Activated naive CD4-positive, alpha-beta T cell treated with anti-CD3 and anti-CD28 coated beads, Interleukin-2, amount 10 ng/mL, durations not matched to agents 7 days and 5 days (primary cell): ENCODE measurements at regions of chr1 and their contacts with region 1.

Region 1: DNA sequence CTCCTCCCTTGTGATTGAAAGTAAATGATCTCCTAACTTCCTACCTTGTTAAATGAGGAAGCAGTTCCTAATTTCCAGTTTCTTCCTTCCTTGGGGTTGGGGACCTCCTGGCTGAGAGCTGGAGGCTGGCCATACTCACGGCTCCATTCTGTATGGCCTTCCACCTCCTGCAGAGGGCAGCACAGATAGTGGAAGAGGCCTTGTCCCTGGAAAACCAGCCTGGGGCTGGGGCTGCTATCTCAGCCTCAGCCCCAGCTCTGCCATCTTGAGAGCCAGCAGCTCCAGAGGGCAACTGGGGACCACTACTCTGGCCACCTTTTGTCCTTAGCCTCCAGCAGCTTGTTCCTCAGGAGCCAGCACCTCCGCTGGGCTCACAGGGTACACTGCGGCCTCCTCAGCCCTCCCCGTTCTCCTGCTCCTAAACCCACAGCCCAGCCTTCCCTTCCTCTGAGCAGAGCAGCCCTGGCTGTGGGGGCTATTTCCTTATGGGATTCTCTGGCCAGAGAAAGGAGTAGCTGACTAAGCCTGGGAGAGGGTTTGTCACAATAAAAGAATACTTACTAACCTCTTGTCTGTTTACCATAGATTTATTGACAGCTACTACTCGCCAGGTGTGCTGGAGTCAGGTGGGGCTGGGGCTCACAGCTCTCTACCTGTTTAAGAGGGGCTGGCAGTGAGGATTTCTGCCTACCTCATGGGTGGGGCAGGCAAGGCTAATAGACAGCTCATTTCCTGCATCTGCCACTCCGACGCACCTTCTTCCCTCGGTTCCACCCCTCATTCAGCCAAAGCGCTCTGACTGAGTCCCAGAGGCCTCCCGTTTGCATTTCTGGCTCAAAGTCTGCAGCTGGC is 6.3 kb downstream of the TMEM234 start:
- DNase-seq: peak; percentile 79
- H3K4me3 Mint-ChIP-seq: no peak overlapping the region
- H3K27ac Mint-ChIP-seq: peak overlapping the region; percentile 74
- H3K4me1 Mint-ChIP-seq: peaks cover 36% of the 10 kb centered on the region
- H3K27me3 Mint-ChIP-seq: no peaks in the 10 kb centered on the region

Region 2: DNA sequence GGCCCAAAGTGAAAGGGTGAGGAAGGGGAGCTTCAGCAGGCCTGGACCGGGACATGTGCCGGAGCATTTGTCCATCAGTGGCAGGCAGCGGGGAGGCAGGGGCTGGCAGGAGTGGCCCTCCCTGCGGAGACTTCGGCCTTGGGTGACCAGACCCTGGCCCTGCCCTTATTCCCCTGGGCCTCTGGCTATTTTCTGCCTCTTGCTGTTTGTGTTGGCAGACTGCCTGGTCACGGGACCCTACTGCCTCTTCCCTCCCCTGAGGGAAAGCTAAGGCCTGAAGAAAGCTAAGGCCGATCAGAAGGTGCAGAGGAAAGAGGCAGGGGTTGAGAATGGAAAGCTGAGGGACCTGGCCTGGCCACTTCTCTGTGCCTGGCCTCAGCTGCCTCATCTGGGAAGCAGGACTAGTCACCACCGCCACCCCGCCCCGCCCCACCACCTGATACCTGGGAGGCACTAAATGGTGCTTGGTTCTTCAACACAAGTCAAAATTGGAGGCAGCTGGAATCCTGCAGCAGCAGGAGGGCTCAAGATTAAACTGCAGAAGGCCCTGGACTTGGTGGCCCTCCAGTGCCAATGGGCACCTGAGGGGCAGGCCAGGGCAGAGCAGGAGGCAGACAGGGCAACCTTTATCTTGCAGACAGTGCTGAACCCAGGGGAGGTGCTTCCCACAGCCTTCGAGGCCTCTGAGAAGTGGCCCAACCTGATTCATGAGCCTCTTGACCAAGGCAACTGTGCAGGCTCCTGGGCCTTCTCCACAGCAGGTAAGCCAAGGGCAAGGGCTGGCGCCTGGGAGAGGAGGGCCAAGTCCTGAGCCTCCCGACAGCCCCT is 631.6 kb before region 1 on chr1:
- CTCF ChIA-PET with region 1: no interaction called
- DNase-seq: no peak
- H3K4me3 Mint-ChIP-seq: no peak overlapping the region
- H3K27ac Mint-ChIP-seq: no peak overlapping the region
- H3K4me1 Mint-ChIP-seq: no peaks in the 10 kb centered on the region
- H3K27me3 Mint-ChIP-seq: peaks cover 21% of the 10 kb centered on the region

Region 3: DNA sequence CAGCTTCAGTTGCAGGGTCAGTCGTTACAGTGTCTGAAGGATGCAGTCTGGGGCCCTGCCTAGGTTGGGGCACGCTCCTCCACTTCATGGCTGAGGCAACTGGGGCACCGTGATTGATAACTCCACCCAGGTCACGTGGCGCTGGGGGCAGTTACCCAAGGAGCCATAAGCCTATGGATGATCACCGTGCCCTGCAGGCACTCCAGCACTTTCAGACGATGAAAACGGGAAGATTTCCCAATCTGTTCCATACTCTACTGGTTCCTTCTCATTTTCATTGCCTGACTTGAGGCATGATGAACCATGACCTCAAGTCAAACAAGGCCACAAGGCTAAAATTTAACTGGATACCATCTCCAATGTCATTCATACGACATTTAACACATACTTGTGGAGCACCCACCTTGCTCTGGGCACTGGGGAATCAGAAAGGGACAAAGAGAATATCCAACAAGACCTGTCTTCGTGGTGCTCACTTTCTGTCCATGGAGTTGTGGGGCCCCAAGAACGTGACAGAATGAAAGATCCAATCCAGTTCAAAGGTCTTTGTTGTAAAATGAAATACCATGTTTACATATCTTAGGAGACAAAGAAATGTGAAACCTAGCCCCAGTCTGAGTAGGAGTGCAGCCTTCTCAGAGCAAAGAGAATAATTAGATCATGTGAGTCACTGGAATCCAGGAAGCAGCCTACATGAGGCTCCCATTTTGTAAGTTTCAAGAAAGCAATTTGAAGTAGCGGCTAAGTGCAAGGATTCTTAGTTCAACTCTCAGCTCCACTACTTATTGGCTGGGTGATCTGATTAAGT is 360.6 kb before region 1 on chr1:
- CTCF ChIA-PET with region 1: no interaction called
- DNase-seq: no peak
- H3K4me3 Mint-ChIP-seq: no peak overlapping the region
- H3K27ac Mint-ChIP-seq: no peak overlapping the region
- H3K4me1 Mint-ChIP-seq: peaks cover 6% of the 10 kb centered on the region
- H3K27me3 Mint-ChIP-seq: no peaks in the 10 kb centered on the region

Region 4: DNA sequence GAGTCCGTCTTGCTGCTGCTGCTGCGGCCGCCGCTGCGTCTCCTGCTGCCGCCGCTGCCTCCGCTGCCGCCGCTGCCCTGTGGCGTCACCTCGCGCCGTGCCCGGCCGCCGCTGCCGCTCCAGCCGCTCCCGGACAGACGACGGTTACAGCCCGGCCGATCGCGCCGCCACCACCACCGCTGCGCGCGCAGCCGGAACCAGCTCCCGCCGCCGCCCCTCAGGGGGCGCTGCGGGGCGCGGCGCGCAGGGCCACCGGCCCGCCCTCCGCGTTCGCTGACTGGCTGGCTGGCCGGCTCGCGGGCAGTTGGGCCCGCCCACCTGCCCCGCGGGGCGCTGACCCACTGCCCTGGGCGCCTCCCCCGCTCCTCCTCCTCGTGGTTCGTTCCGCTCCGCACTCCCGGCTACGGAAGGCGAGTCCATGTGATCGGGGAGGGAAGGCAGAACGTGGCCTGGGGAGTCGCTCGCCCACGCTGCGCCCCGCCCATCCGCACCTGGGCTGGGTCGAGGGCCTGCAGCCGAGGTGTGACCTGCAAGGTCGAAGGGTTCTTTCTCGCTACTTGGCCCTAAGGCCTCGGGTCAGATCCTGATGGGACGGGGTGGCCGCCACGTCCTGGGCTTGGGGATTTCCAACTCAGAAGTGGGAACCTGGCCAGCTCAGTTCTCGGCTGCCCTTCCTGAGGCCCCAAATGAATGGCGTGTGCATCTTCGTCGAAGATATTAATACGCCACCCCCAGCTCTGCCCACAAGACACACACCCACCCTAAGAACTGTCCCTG is 277.5 kb before region 1 on chr1 and contains the start of gene PTP4A2:
- CTCF ChIA-PET with region 1: no interaction called
- DNase-seq: peak; percentile 91
- H3K4me3 Mint-ChIP-seq: peak within 1 kb of the TSS; percentile 92
- H3K27ac Mint-ChIP-seq: peak within 1 kb of the TSS; percentile 95
- H3K4me1 Mint-ChIP-seq: peaks cover 80% of the 10 kb centered on the region
- H3K27me3 Mint-ChIP-seq: no peaks in the 10 kb centered on the region

Region 5: DNA sequence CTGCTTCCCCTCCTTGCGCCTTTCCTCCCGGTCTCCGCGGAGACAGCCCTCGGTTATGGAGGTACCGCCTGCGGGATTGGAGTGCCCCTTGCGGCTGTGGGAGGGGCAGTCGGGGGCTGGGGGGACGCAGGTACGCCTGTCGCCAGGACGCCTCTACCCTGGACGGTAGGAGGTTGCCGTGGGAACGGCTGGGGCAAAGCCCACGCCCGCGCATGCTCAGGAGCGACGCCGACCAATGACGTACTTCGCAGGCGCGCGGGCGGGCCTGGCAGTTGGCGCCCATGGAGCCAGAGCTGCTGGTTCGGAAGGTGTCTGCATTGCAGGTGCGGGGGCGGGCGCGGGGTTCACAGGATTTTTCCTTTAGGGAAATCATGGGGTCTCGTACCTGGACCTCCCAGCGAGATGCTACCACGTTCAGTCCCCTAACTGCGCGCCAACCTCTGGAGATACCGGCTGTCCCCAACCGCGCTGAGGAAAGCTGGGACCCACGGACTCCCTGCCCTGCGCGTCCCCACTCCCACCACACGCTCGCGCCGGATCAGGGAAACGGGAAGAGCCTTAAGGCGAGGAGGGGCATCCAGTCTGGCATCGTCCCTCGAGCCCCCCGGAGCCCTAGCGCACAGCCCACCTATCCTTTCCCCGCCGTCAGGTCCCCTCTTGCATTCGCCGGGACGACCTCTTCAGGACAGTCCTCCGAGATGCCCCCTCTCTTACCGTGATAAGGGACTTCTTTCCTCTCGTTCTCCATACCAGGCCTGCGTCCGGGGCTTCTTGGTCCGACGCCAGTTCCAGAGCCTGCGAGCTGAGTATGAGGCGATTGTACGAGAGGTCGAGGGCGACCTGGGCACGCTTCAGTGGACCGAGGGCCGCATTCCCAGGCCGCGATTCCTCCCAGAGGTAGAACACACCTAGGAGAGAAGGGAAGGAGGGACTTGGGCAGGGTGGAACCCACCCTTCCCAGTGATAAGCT is 10.2 kb before region 1 on chr1 and contains the start of gene IQCC:
- CTCF ChIA-PET with region 1: interaction called, 35 read pairs
- DNase-seq: peak; percentile 90
- H3K4me3 Mint-ChIP-seq: peak within 1 kb of the TSS; percentile 85
- H3K27ac Mint-ChIP-seq: peak within 1 kb of the TSS; percentile 82
- H3K4me1 Mint-ChIP-seq: peaks cover 50% of the 10 kb centered on the region
- H3K27me3 Mint-ChIP-seq: no peaks in the 10 kb centered on the region

Region 6: GRCh38 chr1:32247983-32248889 is 32.4 kb after region 1 on chr1:
- CTCF ChIA-PET with region 1: interaction called, 61 read pairs
- DNase-seq: peak; percentile 85
- H3K4me3 Mint-ChIP-seq: peak overlapping the region; percentile 67
- H3K27ac Mint-ChIP-seq: peak overlapping the region; percentile 96
- H3K4me1 Mint-ChIP-seq: peaks cover 55% of the 10 kb centered on the region
- H3K27me3 Mint-ChIP-seq: no peaks in the 10 kb centered on the region

Region 7: GRCh38 chr1:32321712-32322291 is 105.9 kb after region 1 on chr1:
- CTCF ChIA-PET with region 1: interaction called, 22 read pairs
- DNase-seq: peak; percentile 60
- H3K4me3 Mint-ChIP-seq: peak overlapping the region; percentile 63
- H3K27ac Mint-ChIP-seq: peak overlapping the region; percentile 95
- H3K4me1 Mint-ChIP-seq: peaks cover 59% of the 10 kb centered on the region
- H3K27me3 Mint-ChIP-seq: no peaks in the 10 kb centered on the region

Region 8: DNA sequence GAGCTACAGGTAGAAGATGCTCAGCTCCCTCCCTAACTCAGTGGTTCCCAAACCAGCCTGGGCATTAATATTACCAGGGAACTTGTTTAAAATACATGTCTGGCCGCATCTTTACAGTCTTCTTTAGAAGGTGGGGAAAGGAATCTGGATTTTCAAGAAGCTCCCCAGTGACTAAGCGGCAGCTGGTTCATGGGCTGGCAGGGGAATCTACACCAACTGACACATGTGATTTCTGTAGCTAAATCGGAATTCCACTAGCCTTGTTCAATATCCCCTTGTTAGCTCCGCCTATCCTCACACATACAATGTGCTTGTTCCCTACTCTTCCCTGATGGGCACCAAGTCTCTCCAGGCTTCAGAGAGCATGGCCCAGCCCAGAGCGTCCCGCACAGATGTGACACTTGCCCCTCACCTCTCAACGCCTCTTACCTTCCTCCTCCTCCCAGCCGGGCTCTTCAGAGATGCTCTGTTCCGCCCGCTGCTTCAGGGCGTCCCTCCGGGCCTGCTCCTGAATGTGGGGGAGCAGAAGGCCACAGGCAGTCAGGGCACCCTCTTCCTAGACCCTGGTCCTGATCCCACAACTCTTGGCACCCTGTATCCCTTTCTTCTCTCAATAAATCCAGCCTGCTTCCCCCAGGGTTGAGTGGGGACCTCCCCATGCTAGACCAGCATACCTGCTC is 161.8 kb after region 1 on chr1:
- CTCF ChIA-PET with region 1: interaction called, 46 read pairs
- DNase-seq: no peak
- H3K4me3 Mint-ChIP-seq: no peak overlapping the region
- H3K27ac Mint-ChIP-seq: no peak overlapping the region
- H3K4me1 Mint-ChIP-seq: peaks cover 12% of the 10 kb centered on the region
- H3K27me3 Mint-ChIP-seq: no peaks in the 10 kb centered on the region